Tibial artery (tissue), 4 donors: ENCODE measurements at regions of chr16 and their contacts with region 1.

Region 1: GRCh38 chr16:49701789-49702494 is 154.0 kb downstream of the ZNF423 start:
- DNase-seq: peak; percentile 73 to 84
- H3K4me3 ChIP-seq: no peak overlapping the region
- H3K27ac ChIP-seq: peak overlapping the region in 1 of 2 donors; percentile 75
- H3K4me1 ChIP-seq: peaks cover 8 to 54% (median 39%) of the 10 kb centered on the region in 4 donors
- H3K27me3 ChIP-seq: no peaks in the 10 kb centered on the region
- CTCF ChIP-seq: no peak

Region 2: GRCh38 chr16:49620158-49620868 is 81.6 kb before region 1 on chr16:
- intact Hi-C with region 1: loop called (anchors 10 kb)
- DNase-seq: peak; percentile 85 to 96
- H3K4me3 ChIP-seq: no peak overlapping the region
- H3K27ac ChIP-seq: peak overlapping the region; percentile 73 to 90
- H3K4me1 ChIP-seq: peaks cover 4 to 46% (median 30%) of the 10 kb centered on the region in 4 donors
- H3K27me3 ChIP-seq: no peaks in the 10 kb centered on the region
- CTCF ChIP-seq: no peak

Region 3: GRCh38 chr16:49866595-49867071 is 164.7 kb after region 1 on chr16:
- intact Hi-C with region 1: loop called (anchors 10 kb)
- DNase-seq: no peak
- H3K4me3 ChIP-seq: no peak overlapping the region
- H3K27ac ChIP-seq: no peak overlapping the region
- H3K4me1 ChIP-seq: no peaks in the 10 kb centered on the region
- H3K27me3 ChIP-seq: no peaks in the 10 kb centered on the region
- CTCF ChIP-seq: no peak